ENCODE measurements at regions of chr3 and their contacts with region 1.

Region 1: DNA sequence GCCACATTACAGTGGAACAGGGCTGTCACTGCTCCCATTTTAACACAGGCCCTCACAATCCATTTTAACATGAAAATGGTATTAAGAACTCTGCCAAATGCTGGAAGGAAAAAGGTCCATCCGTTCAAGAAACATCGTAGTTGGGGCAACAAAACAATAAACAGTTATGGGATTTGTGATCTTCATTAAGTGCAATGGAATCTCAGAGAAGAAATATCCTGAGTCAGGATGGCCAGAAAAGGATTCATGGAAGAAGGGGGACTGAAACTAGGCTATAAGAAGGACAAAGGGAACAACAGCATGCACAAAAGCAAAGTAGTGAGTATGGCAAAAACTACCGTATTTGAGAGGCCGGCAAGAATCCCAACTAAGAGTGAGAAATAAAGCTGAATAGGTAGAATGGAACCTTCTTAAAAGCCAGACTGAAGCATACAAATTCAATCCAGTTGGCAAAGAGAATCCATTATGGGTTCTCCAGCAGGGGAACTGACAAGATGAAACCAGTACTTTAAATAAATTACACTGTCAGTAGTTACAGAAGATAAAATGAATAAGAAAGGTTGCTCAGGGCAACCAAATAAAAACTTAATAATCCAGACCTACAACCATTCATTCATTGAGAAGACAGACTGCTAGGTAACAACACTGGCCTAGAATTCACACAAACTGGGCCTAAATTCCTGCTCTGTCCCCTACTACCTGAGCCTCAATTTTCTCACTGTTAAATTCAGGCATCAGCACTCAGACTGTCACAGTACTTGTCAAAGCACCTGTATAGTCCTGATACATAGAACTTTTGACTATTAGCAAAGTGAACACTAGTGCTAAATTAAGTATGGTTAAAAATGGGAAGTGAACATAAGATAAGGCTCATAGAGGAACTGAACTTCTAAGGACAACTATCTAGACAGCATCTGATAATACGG is 6.3 kb downstream of the TBL1XR1 start:
- DNase-seq: no peak

Region 2: DNA sequence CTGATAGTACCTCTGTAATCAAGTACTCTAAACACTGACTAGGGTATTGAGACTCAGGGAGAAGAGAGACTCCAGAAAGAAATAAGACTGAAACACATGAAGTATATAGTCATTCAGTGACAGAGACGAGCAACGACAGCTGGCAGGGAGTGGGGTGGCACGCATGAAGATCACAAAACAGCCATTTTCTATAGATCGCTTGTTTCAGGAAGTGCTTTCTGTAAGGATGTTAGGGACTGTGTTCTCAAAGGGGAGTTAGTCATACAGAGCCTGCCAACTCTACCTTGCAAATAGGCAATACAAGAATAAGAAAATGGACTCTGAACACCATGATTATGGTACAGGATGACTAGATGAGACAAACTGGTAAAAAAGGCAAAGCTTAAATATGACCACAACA is 133.3 kb before region 1 on chr3:
- intact Hi-C with region 1: loop called (anchors 5 kb)
- DNase-seq: no peak

Region 3: GRCh38 chr3:177096615-177097014 is 94.4 kb before region 1 on chr3:
- intact Hi-C with region 1: no loop called
- DNase-seq: no peak

Region 4: DNA sequence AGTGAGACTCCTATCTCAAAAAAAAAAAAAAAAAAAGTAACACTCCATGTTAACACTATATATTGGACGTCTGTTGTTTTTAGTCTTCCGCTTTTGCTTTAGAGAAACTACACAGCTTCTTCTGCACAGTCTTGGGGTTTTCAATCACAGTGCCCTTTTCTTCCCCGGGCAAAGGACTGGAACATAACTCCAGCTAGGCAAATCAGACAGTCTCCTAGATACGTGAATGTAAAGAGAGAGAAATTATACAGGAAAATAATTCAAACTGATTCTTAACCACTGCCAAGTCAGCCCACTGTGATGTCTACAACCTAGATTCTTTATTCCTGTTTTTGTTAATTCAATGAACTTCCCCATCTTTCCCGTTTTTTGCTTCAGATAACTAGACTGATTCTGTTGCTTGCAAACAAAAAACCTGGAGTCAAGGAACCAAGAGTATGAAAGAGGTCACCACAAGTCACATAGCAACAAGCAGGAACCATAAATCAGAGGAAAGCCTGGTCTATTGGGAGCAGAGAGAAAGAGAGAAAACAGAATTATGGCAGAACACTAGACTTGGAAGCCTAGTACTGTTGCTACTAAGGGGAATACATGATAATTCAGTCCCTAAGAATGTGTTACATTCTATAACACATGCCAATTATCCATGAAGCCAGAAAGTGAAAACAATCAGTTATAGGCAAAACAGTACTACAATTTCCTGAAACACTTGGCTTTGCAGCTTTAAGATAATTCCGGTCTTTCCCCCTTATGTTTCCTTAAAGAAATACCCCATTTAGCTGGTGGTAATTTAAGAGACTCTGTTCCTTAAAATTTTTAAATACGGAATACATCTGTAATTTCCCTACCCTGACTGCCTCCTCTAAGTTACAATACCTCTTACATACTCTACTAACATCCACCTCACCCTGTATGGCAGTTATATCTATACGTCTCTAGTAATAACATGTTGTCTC is 56.9 kb before region 1 on chr3:
- intact Hi-C with region 1: loop called (anchors 5 kb)
- DNase-seq: no peak

Region 5: DNA sequence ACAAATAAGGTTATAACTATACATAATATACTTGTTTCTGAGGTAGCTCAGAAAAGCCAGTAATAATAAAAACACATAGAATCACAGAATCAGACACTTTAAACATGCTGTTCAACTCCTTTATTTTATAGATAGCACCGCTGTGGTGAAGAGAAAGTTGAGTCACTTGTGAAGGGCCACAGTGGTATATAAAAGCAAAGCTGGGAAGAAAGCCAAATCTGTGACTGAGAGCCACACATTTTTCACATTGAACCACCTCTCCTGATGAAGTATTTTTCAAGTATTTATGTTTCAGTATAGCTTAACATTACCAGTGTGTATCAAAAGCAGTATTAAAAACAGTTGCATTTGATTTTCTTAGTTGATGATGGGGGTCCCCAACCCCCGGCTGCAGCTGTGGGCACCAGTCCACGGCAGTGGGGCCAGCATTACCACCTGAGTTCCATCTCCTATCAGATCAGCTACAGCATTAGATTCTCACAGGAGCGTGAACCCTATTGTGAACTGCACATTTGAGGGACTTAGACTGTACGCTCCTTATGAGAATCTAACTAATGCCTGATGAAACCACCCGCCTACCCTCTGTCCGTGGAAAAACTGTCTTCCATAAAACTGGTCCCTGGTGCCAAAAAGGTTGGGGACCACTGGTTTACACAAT is 39.9 kb before region 1 on chr3:
- intact Hi-C with region 1: no loop called
- DNase-seq: no peak

Region 6: DNA sequence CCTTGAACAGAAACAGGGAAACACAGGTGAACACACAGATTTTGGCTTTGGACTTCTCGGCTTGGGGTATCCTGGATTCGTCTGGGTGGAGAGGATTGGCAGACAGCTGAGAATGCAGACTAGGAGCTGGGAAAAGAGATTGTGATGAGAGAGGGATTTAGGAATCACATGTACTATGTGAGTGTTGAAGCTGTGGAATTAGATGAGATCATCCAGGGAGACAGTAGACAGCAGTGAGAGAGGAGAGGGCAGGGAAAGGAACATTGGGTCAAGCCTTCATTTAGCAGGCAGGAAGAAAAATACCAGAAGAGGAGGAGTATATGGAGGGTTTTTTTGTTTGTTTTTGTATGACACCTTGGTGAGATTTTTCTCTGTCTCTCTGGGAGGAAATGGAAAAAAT is 268.4 kb after region 1 on chr3:
- intact Hi-C with region 1: loop called (anchors 5 kb)
- DNase-seq: no peak